ENCODE measurements at regions of chr11 and their contacts with region 1.

Region 1: GRCh38 chr11:105862736-105863367 is 159.2 kb downstream of the MSANTD4 start:
- DNase-seq: no peak

Region 2: GRCh38 chr11:104609311-104610085 is 1253.4 kb before region 1 on chr11:
- intact Hi-C with region 1: loop called (anchors 5 kb)
- DNase-seq: peak in 6 of 10 donors; percentile 4 to 70 (median 34)

Region 3: DNA sequence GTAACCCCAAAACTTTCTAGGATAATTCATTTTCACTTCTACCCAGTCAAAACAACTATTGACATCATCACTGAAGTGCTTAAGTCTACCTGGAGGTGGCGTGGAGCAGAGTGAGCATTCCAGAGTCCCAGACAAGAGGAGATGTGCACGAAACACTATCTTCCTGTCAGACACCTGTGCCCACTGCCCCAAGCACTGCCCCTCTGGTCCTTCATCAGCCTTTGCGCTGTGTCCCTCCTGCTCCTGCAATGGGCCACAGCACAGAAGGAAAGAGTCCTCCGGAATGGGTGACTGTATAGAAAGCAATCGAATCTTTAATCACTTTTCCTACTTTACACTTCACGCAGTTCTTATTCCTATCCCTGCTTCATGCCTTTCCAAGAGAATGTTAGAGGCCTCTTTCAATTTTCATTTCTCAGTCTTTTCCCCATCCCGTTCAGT is 253.5 kb before region 1 on chr11:
- intact Hi-C with region 1: loop called (anchors 2 kb)
- DNase-seq: peak in 8 of 10 donors; percentile 25 to 90 (median 50)

Measured in posterior cingulate gyrus (tissue), 11 donors.